Esophagus muscularis mucosa (tissue), 4 donors: ENCODE measurements at regions of chr9 and their contacts with region 1.

Region 1: GRCh38 chr9:99158629-99159028 is 53.7 kb downstream of the TGFBR1 start:
- DNase-seq: no peak
- H3K4me3 ChIP-seq: no peak overlapping the region
- H3K27ac ChIP-seq: no peak overlapping the region
- H3K4me1 ChIP-seq: peaks cover 0 to 6% (median 0%) of the 10 kb centered on the region in 4 donors
- H3K27me3 ChIP-seq: no peaks in the 10 kb centered on the region
- CTCF ChIP-seq: no peak
- EP300 ChIP-seq: no peak
- POLR2A ChIP-seq: no peak

Region 2: DNA sequence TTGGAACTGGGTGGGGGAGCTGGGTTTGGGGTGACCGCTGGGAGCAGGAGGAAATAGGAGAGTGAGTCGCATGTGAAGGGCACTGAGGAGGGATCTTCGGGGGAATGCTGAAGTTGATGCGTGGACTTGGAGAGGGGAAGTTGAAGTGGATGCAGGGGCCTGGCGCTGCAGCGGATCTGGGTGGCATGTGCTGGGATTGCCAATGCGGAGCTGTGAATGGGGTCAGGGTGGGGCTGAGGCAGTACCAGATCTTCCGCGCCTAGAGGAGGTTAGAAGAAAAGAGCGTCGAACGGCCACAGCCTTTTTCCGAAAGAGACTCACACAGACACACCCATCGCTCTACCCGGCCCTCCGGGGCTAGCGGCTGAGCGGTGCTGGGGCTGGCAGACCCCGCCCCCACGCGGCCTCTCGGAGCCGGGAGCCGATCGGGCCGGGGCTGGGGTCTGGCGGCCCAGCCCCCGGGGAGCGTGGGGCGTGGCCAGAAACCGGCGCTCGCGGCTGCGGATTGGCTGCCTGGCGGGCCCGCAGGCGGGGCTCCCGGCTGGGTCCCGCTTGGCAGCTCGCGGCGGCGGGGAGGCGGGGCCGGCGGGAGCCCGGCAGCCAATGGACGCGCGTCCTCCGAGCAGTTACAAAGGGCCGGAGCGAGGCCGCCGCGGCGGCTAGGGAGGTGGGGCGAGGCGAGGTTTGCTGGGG is 54.0 kb before region 1 on chr9 and contains the start of gene TGFBR1:
- intact Hi-C with region 1: loop called (anchors 10 kb)
- DNase-seq: peak; percentile 95
- H3K4me3 ChIP-seq: peak within 1 kb of the TSS; percentile 87 to 97 (median 96)
- H3K27ac ChIP-seq: peak within 1 kb of the TSS; percentile 89 to 96 (median 93)
- H3K4me1 ChIP-seq: peaks cover 44 to 63% (median 54%) of the 10 kb centered on the region in 4 donors
- H3K27me3 ChIP-seq: no peaks in the 10 kb centered on the region
- CTCF ChIP-seq: peak in 2 of 3 experiments; percentile 17 to 27
- EP300 ChIP-seq: no peak
- POLR2A ChIP-seq: peak; percentile 37
- total RNA-seq, gene TGFBR1: 33.7 to 63.1 (median 48.1) TPM